Activated B cell treated with CpG ODN at 0.5 μM for 24 hours (primary cell): ENCODE measurements at regions of chr19 and their contacts with region 1.

Region 1: DNA sequence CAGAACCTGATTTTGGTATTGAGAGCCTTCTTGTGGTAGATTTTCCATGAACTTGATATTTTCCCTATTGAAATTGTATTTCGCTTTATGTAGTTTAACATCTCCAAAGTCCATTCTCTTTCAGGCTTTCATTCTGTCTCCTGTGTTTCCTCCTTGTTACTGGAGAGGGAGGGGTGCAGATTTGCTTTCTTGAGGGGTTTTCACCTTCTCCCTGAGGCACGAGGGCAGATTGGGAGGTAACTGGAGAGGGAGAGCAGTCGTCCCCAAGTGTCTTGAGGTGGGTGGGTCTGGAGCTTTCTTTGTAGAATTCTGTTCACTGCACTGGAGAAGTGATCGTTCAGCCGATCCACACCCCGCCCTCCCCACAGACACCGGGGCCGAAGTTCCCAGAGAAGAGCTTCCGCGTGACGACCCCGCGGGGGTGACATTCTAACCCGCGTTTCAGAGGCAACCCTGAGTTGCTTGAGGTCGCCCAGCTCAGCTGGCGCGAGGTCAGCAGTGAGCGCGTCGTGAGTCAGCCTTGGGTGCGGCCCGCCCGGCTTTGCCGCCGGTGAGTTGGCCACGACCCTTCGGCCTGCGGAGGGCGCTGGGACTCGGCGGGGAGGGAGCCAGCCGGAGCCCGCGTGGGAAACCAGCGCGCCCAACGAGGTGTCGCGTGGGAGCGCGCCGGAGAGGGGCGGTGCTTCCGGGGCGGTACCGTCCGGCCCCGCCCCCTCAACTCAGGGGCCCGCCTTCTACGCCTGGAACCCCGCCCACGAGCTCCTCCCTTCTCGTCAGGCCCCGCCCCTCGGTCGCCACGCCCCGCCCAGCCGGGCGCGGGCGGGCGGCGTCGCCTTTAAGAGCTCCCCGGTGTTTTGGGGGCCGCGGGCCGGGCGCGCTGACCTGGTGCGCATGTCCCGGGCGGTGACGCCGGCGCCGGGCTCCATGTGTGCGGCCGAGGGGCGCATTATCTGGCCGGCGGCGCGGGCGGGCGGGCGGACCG is at the start of gene GATAD2A:
- DNase-seq: peak; percentile 96
- ATAC-seq: peak; percentile 86
- H3K4me3 Mint-ChIP-seq: peak within 1 kb of the TSS; percentile 97
- H3K27ac Mint-ChIP-seq: peak within 1 kb of the TSS; percentile 89
- H3K4me1 Mint-ChIP-seq: peaks cover 55% of the 10 kb centered on the region
- H3K27me3 Mint-ChIP-seq: no peaks in the 10 kb centered on the region
- CTCF ChIP-seq: no peak
- total RNA-seq, gene GATAD2A: 116 and 126 TPM in 2 replicates

Region 2: DNA sequence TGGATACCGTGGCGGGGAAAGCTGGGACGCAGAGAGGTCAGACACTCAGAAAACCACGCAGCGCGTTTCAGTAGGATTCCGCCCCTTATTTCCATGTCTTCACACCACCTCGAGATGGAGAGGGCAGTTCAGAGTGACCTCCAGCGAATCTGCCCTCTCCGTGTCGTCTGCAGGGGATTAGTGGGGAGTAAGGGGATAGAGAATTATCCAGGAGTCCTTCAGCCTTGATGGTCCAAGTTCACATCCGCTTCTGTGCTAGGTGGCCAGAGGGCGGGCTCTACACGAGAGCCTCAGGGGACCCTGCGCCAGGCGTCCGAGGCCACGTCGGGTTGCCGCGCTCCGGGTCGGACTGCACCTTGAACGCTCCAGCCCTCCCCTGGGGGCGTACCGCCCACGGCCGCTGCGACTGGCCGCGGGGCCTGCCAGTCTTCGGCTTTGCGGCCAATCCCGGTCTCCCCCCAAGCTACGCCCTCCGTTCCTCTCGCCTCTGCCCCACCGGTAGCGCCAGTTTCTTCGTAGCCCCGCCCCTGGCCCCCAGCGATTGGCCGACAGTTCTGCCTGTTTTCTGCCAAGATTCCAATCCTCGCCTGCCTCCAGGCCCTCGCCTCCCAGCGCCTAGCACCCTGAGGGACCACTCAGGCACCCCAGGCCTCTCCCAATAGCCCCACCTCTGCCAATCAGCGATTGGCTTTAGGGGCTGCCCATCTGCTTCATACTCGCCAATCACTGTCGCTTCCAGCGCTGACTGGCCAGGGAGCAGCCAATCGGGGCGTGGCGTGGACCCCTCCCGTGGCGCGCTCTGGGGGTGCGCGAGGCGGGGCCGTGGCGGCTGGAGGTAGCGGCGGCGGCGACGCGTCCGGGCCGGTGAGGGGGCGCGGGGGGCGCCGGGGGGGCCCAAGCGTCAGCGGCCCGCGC is 341.7 kb before region 1 on chr19 and contains the start of gene SLC25A42:
- CTCF ChIA-PET with region 1: no interaction called
- POLR2A ChIA-PET with region 1: interaction called, 3 read pairs
- intact Hi-C with region 1: loop called (anchors 10 kb)
- DNase-seq: peak; percentile 96
- ATAC-seq: peak; percentile 89
- H3K4me3 Mint-ChIP-seq: peak within 1 kb of the TSS; percentile 88
- H3K27ac Mint-ChIP-seq: peak within 1 kb of the TSS; percentile 89
- H3K4me1 Mint-ChIP-seq: peaks cover 52% of the 10 kb centered on the region
- H3K27me3 Mint-ChIP-seq: no peaks in the 10 kb centered on the region
- CTCF ChIP-seq: no peak
- total RNA-seq, gene SLC25A42: 14.2 and 17.5 TPM in 2 replicates

Region 3: DNA sequence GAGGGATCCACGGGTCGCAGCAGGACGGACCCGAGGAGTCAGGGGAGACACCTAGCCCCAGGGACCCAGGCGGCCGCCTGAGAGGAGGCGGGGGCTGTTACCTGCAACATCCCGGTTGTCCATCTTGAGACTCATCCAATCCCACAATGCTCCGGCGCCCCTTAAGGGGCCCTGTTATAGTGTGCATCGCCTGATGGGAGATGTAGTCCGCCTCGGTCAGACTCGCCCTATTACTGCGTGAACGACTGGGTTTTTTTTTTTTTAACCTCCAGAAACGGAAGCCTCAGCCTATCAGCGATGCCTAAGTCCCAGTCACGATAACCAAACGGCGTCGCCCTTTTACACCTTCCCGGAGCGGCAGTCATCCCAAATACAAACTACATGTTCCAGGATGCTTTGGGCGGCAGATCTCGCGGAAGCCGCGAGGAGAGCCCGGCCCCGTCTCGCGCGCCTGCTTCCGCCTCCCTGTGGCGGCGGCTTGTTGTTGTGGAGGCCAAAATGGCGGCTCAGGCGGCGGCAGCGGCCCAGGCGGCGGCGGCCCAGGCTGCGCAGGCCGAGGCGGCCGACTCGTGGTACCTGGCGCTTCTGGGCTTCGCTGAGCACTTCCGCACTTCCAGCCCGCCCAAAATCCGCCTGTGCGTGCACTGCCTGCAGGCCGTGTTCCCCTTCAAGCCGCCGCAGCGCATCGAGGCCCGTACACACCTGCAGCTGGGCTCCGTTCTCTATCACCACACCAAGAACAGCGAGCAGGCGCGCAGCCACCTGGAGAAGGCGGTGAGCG is 84.6 kb before region 1 on chr19 and contains the starts of genes MAU2 and SUGP1:
- CTCF ChIA-PET with region 1: no interaction called
- POLR2A ChIA-PET with region 1: no interaction called
- intact Hi-C with region 1: loop called (anchors 1 kb)
- DNase-seq: peak; percentile 82
- ATAC-seq: peak; percentile 92
- H3K4me3 Mint-ChIP-seq: peak within 1 kb of the TSS; percentile 98
- H3K27ac Mint-ChIP-seq: peak within 1 kb of the TSS; percentile 100
- H3K4me1 Mint-ChIP-seq: peaks cover 42% of the 10 kb centered on the region
- H3K27me3 Mint-ChIP-seq: no peaks in the 10 kb centered on the region
- CTCF ChIP-seq: no peak
- total RNA-seq, gene MAU2: 107 and 126 TPM in 2 replicates
- total RNA-seq, gene SUGP1: 68.6 and 73.0 TPM in 2 replicates

Region 4: DNA sequence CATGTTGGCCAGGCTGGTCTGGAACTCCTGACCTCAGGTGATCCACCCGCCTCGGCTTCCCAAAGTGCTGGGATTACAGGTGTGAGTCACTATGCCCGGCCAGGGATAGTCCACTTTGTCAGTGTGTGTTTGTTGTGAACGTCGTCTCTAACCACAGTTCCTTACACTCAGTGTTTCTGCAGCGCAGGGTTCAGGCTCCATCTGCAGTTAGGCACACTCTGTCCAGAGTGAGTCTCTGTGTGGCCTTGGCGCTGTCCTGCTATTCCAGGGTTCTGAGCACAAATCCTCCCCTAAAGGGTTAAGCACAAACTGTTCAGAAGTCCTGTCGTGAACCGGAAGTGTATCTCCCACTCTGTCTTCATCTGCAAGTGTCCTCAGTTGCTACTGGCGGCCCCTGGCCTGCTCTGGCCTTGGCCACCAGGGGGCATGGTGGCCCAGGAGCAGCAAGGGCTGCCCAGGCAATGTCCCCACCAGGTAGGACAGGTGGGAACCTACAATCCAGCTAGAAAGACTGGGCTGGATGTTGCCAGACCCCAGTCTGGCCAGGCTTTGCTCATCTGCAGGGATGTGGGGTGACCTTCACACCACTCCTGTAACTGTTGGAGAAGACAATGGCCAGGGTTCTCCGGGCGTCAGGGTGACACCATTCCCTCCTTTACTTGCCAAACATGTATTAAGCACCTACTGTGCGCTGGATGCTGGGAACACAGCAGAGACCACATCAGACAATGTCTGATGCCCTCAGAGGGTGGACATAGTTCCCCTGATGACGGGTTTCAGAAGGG is 38.4 kb before region 1 on chr19:
- CTCF ChIA-PET with region 1: interaction called, 35 read pairs
- POLR2A ChIA-PET with region 1: interaction called, 12 read pairs
- intact Hi-C with region 1: loop called (anchors 1 kb)
- DNase-seq: peak; percentile 65
- ATAC-seq: peak; percentile 84
- H3K4me3 Mint-ChIP-seq: peak overlapping the region; percentile 36
- H3K27ac Mint-ChIP-seq: peak overlapping the region; percentile 69
- H3K4me1 Mint-ChIP-seq: peaks cover 20% of the 10 kb centered on the region
- H3K27me3 Mint-ChIP-seq: no peaks in the 10 kb centered on the region
- CTCF ChIP-seq: peak; percentile 83

Region 5: GRCh38 chr19:19385108-19385899 is 19.9 kb before region 1 on chr19:
- CTCF ChIA-PET with region 1: interaction called, 6 read pairs
- POLR2A ChIA-PET with region 1: interaction called, 29 read pairs
- intact Hi-C with region 1: loop called (anchors 1 kb)
- DNase-seq: peak; percentile 98
- ATAC-seq: peak; percentile 89
- H3K4me3 Mint-ChIP-seq: peak overlapping the region; percentile 87
- H3K27ac Mint-ChIP-seq: peak overlapping the region; percentile 83
- H3K4me1 Mint-ChIP-seq: peaks cover 43% of the 10 kb centered on the region
- H3K27me3 Mint-ChIP-seq: no peaks in the 10 kb centered on the region
- CTCF ChIP-seq: no peak

Region 6: DNA sequence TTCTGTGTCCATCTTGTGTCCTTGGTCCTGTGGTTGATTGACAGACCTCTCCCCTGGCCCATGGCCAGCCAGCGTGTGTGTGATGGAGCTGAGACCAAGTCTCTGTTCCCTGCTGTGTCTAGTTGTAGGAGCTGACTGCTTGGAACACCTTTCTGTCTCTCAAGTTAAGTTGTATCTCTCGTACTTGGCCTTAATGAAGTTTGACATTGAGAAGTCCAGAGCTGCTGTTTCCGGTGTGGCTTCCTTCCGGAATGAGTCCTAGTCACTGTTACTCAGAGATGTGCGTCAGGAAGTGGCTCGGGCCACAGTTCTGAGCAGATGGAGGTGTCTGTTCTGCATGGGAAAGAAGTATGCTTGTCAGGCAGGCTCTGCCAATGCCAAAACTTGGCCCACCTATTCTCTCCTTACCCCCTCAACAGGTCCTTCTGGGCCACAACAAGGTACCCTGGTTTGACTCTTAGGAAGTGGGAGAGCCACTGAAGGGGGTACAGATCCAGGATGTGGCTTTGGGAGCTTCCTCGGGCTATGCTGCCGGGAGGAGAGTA is 54.6 kb after region 1 on chr19:
- CTCF ChIA-PET with region 1: interaction called, 4 read pairs
- POLR2A ChIA-PET with region 1: interaction called, 12 read pairs
- intact Hi-C with region 1: loop called (anchors 2 kb)
- DNase-seq: no peak
- ATAC-seq: peak; percentile 69
- H3K4me3 Mint-ChIP-seq: peak overlapping the region; percentile 83
- H3K27ac Mint-ChIP-seq: peak overlapping the region; percentile 86
- H3K4me1 Mint-ChIP-seq: peaks cover 72% of the 10 kb centered on the region
- H3K27me3 Mint-ChIP-seq: no peaks in the 10 kb centered on the region
- CTCF ChIP-seq: no peak

Region 7: GRCh38 chr19:19515764-19516519 is 110.8 kb after region 1 on chr19 and contains the start of gene NDUFA13:
- CTCF ChIA-PET with region 1: interaction called, 4 read pairs
- POLR2A ChIA-PET with region 1: interaction called, 12 read pairs
- intact Hi-C with region 1: no loop called
- DNase-seq: peak; percentile 97
- ATAC-seq: peak; percentile 90
- H3K4me3 Mint-ChIP-seq: peak within 1 kb of the TSS; percentile 95
- H3K27ac Mint-ChIP-seq: peak within 1 kb of the TSS; percentile 93
- H3K4me1 Mint-ChIP-seq: peaks cover 38% of the 10 kb centered on the region
- H3K27me3 Mint-ChIP-seq: no peaks in the 10 kb centered on the region
- CTCF ChIP-seq: no peak
- total RNA-seq, gene NDUFA13: 294 and 317 TPM in 2 replicates

Region 8: GRCh38 chr19:19597809-19598306 is 192.7 kb after region 1 on chr19:
- CTCF ChIA-PET with region 1: no interaction called
- POLR2A ChIA-PET with region 1: no interaction called
- intact Hi-C with region 1: no loop called
- DNase-seq: no peak
- ATAC-seq: peak; percentile 80
- H3K4me3 Mint-ChIP-seq: peak overlapping the region; percentile 62
- H3K27ac Mint-ChIP-seq: peak overlapping the region; percentile 89
- H3K4me1 Mint-ChIP-seq: peaks cover 67% of the 10 kb centered on the region
- H3K27me3 Mint-ChIP-seq: no peaks in the 10 kb centered on the region
- CTCF ChIP-seq: no peak